PC-9 (cell line): ENCODE measurements at regions of chr13 and their contacts with region 1.

Region 1: DNA sequence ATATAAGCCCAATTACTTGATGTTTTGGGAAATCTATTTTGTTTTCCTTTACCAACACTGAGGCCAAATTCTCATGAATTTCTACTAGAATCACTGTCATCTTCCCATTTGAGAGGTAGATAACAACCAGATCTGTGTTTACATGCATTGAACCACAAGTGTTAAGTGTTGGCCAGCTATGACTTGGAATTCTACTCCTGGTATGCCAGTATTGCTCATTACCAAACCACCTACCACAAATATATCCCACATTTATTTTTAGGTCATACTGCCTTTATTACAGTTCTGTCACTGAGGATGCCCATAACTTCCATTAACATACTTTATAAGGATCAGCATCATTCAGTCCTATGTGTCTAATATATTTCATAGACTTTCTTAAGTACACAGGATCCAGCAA is 328.9 kb downstream of the DIAPH3 start:
- DNase-seq: no peak
- H3K4me3 ChIP-seq: no peak overlapping the region
- H3K27ac ChIP-seq: no peak overlapping the region
- H3K4me1 ChIP-seq: no peaks in the 10 kb centered on the region
- H3K27me3 ChIP-seq: no peaks in the 10 kb centered on the region
- CTCF ChIP-seq: no peak

Region 2: DNA sequence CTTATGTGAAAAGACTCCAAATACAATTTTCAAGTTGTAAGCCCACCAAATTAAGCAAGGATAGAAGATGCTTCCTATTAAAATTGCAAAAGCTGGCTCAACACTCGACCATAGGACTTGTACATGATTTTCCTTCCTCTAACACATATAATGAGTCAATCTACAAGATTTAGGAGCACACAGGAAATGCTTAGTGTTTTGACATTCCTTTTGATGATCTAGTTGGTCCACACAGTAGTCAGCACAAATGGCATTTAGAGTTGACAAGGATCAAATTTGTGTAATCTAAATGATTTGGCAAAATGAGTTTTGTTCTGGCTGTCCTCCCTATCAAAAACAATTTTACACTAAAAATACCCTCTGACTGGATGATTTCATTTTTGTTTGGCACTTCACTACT is 11.3 kb before region 1 on chr13:
- CTCF ChIA-PET with region 1: no interaction called
- POLR2A ChIA-PET with region 1: interaction called, 4 read pairs
- intact Hi-C with region 1: loop called (anchors 2 kb)
- DNase-seq: no peak
- H3K4me3 ChIP-seq: no peak overlapping the region
- H3K27ac ChIP-seq: no peak overlapping the region
- H3K4me1 ChIP-seq: 0 out of 2 replicates have a peak, but pooled peaks cover 6% of the 10 kb centered on the region
- H3K27me3 ChIP-seq: no peaks in the 10 kb centered on the region
- CTCF ChIP-seq: no peak

Region 3: DNA sequence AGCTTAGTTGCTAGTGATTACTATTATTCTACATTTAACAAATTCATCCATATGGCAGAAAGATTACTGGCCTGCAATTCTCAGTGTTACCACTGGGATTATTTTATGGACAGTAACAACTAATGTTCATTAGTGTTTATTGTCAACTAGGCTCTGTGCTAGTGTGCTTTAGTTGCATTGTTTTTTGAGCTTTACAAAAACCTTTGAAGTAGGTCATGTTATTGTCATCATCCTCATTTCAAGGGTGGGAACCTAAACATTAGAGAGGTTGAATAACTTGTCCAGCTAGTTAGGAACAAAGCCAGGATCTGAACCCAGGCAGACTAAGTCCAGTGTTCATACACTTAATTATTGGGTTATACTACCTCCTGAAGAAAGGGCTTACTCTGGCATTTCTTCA is 534.4 kb after region 1 on chr13:
- CTCF ChIA-PET with region 1: no interaction called
- POLR2A ChIA-PET with region 1: interaction called, 10 read pairs
- intact Hi-C with region 1: no loop called
- DNase-seq: no peak
- H3K4me3 ChIP-seq: no peak overlapping the region
- H3K27ac ChIP-seq: no peak overlapping the region
- H3K4me1 ChIP-seq: no peaks in the 10 kb centered on the region
- H3K27me3 ChIP-seq: no peaks in the 10 kb centered on the region
- CTCF ChIP-seq: peak; percentile 58

Region 4: DNA sequence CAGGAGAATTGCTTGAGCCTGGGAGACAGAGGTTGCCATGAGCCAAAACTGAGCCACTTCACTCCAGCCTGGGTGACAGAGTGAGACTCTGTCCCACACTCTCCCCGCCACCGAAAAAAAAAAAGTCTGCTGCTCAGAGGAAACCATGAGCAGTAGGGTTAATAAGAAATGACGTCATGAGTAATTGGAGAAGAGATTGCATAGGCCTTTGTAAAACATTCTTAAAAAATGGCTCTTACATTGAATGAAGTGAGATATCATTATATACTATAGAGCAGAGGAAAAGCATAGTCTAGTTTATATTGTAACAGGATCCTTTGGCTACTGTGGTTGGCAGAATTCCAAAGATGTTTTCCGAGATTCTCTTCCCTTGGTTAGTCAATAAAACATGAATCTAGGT is 1352.7 kb after region 1 on chr13:
- CTCF ChIA-PET with region 1: no interaction called
- POLR2A ChIA-PET with region 1: no interaction called
- intact Hi-C with region 1: no loop called
- DNase-seq: no peak
- H3K4me3 ChIP-seq: no peak overlapping the region
- H3K27ac ChIP-seq: no peak overlapping the region
- H3K4me1 ChIP-seq: no peaks in the 10 kb centered on the region
- H3K27me3 ChIP-seq: no peaks in the 10 kb centered on the region
- CTCF ChIP-seq: no peak